AG04450 (cell line): ENCODE measurements at regions of chr6 and their contacts with region 1.

Region 1: GRCh38 chr6:72622094-72622940 is 453 bp downstream of the KCNQ5 start:
- DNase-seq: no peak
- H3K4me3 ChIP-seq: peak overlapping the region; percentile 67
- H3K27ac ChIP-seq: no peak overlapping the region
- H3K27me3 ChIP-seq: no peaks in the 10 kb centered on the region
- CTCF ChIP-seq: 0 out of 2 replicates have a peak, but pooled peaks have one; percentile 16

Region 2: GRCh38 chr6:72636215-72636614 is 13.9 kb after region 1 on chr6:
- CTCF ChIA-PET with region 1: interaction called, 15 read pairs
- POLR2A ChIA-PET with region 1: no interaction called
- DNase-seq: no peak
- H3K4me3 ChIP-seq: no peak overlapping the region
- H3K27ac ChIP-seq: no peak overlapping the region
- H3K27me3 ChIP-seq: no peaks in the 10 kb centered on the region
- CTCF ChIP-seq: no peak

Region 3: GRCh38 chr6:73129653-73130443 is 507.5 kb after region 1 on chr6:
- CTCF ChIA-PET with region 1: interaction called, 262 read pairs
- POLR2A ChIA-PET with region 1: no interaction called
- DNase-seq: peak; percentile 37
- H3K4me3 ChIP-seq: no peak overlapping the region
- H3K27ac ChIP-seq: no peak overlapping the region
- H3K27me3 ChIP-seq: no peaks in the 10 kb centered on the region
- CTCF ChIP-seq: peak; percentile 100